ENCODE measurements at regions of chr2 and their contacts with region 1.

Region 1: GRCh38 chr2:61620244-61621159 is 82.3 kb upstream of the XPO1 start:
- H3K4me3 ChIP-seq: no peak overlapping the region
- H3K27ac ChIP-seq: peak overlapping the region; percentile 26; the same call in 1 of the 2 replicates
- H3K4me1 ChIP-seq: no peaks in the 10 kb centered on the region
- CTCF ChIP-seq: no peak

Region 2: GRCh38 chr2:61538200-61538919 is 82.1 kb before region 1 on chr2 and contains the start of gene XPO1:
- CTCF ChIA-PET with region 1: interaction called, 4 read pairs
- POLR2A ChIA-PET with region 1: interaction called, 14 read pairs
- H3K4me3 ChIP-seq: peak within 1 kb of the TSS; percentile 88
- H3K27ac ChIP-seq: peak within 1 kb of the TSS; percentile 80
- H3K4me1 ChIP-seq: peaks cover 7% of the 10 kb centered on the region
- CTCF ChIP-seq: peak; percentile 13; the same call in 1 of the 2 replicates

Region 3: DNA sequence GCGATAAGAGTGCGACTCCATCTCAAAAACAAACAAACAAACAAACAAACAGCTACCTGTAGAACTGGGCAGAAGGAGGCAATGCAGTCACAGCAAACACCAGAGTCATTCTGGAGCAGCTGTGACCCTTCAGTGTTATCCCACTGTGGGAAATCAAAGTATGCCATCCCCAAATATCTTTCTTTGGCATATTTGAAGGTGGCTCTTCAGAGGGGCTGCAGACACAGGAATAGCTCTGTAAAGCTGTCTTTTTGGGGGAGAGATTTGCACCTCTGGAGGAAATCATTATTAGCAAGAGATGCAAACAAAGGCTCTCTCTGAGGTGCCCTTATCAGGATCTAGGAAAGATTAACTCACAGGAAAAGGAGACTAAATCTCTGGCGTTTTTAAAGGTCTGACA is 16.2 kb after region 1 on chr2:
- CTCF ChIA-PET with region 1: interaction called, 10 read pairs
- POLR2A ChIA-PET with region 1: no interaction called
- H3K4me3 ChIP-seq: no peak overlapping the region
- H3K27ac ChIP-seq: no peak overlapping the region
- H3K4me1 ChIP-seq: no peaks in the 10 kb centered on the region
- CTCF ChIP-seq: no peak